SK-N-SH (cell line): ENCODE measurements at regions of chr20 and their contacts with region 1.

Region 1: DNA sequence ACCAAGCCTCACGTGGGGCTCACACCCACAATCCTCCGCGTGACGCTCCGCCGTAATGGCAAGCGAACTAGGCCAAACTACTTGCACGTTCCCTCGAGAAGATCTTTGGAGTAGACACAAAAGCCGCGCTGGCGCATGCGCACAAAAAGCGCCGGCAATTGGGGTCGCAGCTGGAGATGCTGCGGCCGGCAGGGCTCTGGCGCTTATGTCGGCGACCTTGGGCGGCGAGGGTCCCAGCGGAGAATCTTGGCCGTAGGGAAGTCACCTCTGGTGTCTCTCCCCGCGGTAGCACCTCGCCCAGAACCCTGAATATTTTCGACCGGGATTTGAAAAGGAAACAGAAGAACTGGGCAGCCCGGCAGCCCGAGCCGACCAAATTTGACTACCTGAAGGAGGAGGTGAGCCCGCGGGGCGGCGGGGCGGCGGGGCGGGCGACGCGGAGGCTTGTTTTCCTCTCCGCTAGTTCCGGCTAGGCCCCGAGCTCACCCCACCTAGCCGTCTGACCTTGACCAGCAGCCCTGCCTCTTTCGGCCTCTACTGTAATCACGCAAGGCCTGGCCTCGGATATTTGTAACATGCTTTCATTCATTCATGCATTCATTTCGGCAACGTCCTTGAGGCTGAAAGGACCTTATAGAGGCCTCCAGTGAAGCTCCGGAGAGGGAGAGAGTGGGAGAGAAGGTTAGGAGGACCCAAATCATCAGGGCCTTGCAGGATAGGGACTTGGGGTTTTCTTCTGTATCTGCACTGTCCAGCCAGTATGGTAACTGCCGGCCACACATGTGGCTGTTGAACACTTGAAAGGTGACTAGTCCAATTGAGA is at the starts of genes ESF1 and NDUFAF5:
- DNase-seq: peak; percentile 91
- H3K4me3 ChIP-seq: peak within 1 kb of the TSS; percentile 89
- H3K27ac ChIP-seq: peak within 1 kb of the TSS; percentile 71 to 89
- H3K4me1 ChIP-seq: peaks cover 7 to 14% of the 10 kb centered on the region in 2 experiments
- H3K27me3 ChIP-seq: no peaks in the 10 kb centered on the region
- CTCF ChIP-seq: no peak
- EP300 ChIP-seq: peak in 1 of 2 experiments; percentile 29; a peak in 1 of 4 replicates
- RAD21 ChIP-seq: no peak
- polyA plus RNA-seq, gene ESF1: 1.4 and 1.8 TPM in 2 replicates
- polyA plus RNA-seq, gene NDUFAF5: 8.0 TPM in 2 replicates

Region 2: DNA sequence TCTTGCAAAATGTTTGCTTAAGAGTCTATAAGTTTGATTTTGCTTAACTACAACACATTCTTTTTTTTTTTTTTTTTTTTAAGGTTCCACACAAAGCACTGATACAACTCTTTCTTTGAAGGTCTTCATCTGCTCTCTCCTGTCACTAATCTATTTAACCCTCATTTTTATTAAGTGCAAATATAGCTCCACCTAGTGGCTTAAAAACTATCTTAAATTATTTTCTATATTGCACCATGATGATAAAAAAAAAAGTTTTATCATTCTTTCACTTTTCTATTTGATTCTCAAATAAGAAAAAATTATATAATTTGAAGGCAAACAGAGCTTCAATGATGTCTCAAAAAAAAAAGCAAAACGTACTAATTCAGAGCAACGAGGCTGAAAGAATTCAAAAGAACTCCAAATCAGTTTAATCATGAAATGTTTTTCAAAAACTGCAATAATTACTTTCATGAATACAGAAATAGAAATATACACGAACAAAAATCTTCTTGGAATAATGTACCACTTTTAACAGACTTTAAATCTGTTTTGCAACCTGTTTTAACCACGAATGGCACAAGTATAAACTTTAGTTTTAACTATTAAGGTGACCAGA is 13.2 kb before region 1 on chr20:
- CTCF ChIA-PET with region 1: interaction called, 10 read pairs
- POLR2A ChIA-PET with region 1: interaction called, 5 read pairs
- DNase-seq: peak; percentile 50
- H3K4me3 ChIP-seq: no peak overlapping the region
- H3K27ac ChIP-seq: 0 out of 4 replicates have a peak overlapping the region, but pooled peaks of 1 of the 2 experiments have one; percentile 12
- H3K4me1 ChIP-seq: peaks cover 0 to 12% of the 10 kb centered on the region in 2 experiments; a peak in 1 of 4 replicates
- H3K27me3 ChIP-seq: no peaks in the 10 kb centered on the region
- CTCF ChIP-seq: peak; percentile 71
- EP300 ChIP-seq: no peak
- RAD21 ChIP-seq: peak; percentile 61

Region 3: GRCh38 chr20:13800728-13801134 is 15.6 kb after region 1 on chr20:
- CTCF ChIA-PET with region 1: interaction called, 11 read pairs
- POLR2A ChIA-PET with region 1: no interaction called
- DNase-seq: peak; percentile 67
- H3K4me3 ChIP-seq: 0 out of 4 replicates have a peak overlapping the region, but pooled peaks of 1 of the 2 experiments have one; percentile 8
- H3K27ac ChIP-seq: peak overlapping the region; percentile 27 to 95; a peak in 3 of 4 replicates
- H3K4me1 ChIP-seq: peaks cover 8 to 17% of the 10 kb centered on the region in 2 experiments
- H3K27me3 ChIP-seq: no peaks in the 10 kb centered on the region
- CTCF ChIP-seq: no peak
- EP300 ChIP-seq: peak; percentile 47 to 62; a peak in 3 of 4 replicates
- RAD21 ChIP-seq: no peak

Region 4: DNA sequence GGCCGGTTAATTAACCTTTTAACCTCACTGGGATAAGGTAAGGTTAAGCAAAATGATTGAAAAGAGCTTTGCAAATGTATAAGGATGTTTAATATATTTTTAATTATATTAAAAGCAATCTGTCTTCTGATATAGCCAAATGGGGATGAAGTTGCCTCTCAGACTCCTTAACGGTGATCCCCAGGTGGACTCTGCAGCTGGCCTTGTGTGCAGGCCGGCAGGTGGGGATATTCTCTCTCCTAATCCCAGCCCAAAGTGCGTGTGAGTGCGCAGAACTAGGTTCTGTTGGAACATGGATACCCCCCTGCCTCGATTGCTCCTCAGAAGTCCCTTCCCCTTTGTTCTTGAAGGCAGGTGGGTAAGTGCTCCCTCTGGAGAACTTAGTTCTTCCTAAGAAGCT is 99.7 kb after region 1 on chr20:
- CTCF ChIA-PET with region 1: no interaction called
- POLR2A ChIA-PET with region 1: no interaction called
- DNase-seq: no peak
- H3K4me3 ChIP-seq: no peak overlapping the region
- H3K27ac ChIP-seq: no peak overlapping the region
- H3K4me1 ChIP-seq: no peaks in the 10 kb centered on the region
- H3K27me3 ChIP-seq: no peaks in the 10 kb centered on the region
- CTCF ChIP-seq: no peak
- EP300 ChIP-seq: no peak
- RAD21 ChIP-seq: no peak

Region 5: DNA sequence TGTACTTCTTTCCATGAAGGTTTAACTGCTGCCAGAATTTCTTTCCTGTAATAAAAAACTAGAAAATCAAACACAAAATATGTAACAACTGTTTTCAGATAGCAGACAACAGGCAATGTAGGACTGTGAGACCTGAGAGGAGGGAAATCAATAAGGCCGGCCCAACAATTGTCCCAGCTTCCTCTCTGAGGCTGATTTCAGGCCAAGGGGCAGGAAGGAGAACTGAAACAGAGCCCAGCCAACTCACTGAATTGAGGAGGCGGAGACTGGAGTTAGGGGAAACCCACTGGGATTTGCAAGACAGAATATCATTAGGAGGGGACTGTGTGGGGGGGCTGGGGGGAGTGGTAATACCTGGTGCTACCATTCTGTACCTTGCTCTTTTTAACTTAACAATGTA is 510.1 kb after region 1 on chr20:
- CTCF ChIA-PET with region 1: no interaction called
- POLR2A ChIA-PET with region 1: no interaction called
- DNase-seq: no peak
- H3K4me3 ChIP-seq: no peak overlapping the region
- H3K27ac ChIP-seq: no peak overlapping the region
- H3K4me1 ChIP-seq: no peaks in the 10 kb centered on the region
- H3K27me3 ChIP-seq: no peaks in the 10 kb centered on the region
- CTCF ChIP-seq: no peak
- EP300 ChIP-seq: no peak
- RAD21 ChIP-seq: no peak